ENCODE measurements at regions of chr1 and their contacts with region 1.

Region 1: DNA sequence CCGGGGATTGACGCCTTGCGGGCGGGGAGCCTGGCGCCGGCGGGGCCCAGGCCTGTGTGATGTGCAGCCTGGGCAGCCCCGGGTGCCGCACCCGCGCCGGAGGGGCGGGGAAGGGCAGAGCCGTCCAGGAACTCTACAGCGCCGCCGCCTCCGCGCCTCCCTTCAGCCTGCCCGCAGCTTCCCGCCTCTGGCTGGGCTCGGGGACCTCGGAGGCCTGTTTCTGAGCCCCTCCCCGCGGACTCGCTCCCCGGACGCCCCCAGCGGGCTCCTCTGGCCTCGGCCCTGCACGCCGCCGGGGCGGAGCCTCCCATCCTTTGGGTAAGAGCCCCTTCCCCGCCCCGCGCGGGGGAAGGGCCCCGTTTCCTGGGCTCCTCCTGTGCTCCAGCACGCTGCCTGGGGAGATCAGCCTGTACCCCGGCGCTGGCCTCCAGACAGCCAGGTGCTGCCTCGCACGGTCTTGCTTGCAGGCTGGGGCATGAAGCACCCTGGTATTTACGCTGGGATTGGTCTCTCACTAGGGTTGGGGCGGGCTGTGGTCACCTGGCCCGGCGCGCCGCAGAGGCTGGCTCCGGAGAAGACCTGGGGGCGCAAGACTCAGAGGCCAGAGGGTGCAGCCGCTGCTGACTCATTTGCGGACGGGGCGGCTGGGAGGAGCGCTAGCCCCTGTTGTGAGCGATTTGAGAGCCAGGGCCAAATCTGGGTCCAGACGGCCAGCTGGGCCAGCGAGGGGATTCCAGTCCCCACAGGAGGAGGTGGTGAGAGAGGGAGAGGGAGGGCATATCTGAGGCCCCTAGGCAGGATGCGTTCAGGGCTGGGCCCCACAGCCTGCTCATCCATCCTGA is 5.7 kb upstream of the ACOT11 start:
- DNase-seq: peak; percentile 76 to 89
- H3K4me3 ChIP-seq: peak overlapping the region; percentile 18 to 67 (median 53)
- H3K27ac ChIP-seq: peak overlapping the region; percentile 66
- H3K4me1 ChIP-seq: peaks cover 4 to 14% (median 8%) of the 10 kb centered on the region in 4 experiments
- H3K27me3 ChIP-seq: no peaks in the 10 kb centered on the region
- CTCF ChIP-seq: peak in 1 of 3 experiments; percentile 12; a peak in 1 of 4 replicates
- EP300 ChIP-seq: no peak
- POLR2A ChIP-seq: peak; percentile 20 to 69; a peak in 2 of 3 replicates
- RAD21 ChIP-seq: no peak; a peak in 1 of 4 replicates

Region 2: GRCh38 chr1:54397090-54397591 is 145.2 kb before region 1 on chr1:
- CTCF ChIA-PET with region 1: no interaction called
- POLR2A ChIA-PET with region 1: no interaction called
- DNase-seq: no peak
- H3K4me3 ChIP-seq: no peak overlapping the region
- H3K27ac ChIP-seq: no peak overlapping the region
- H3K4me1 ChIP-seq: peaks cover 0 to 6% (median 4%) of the 10 kb centered on the region in 4 experiments; a peak in 4 of 7 replicates
- H3K27me3 ChIP-seq: no peaks in the 10 kb centered on the region
- CTCF ChIP-seq: no peak
- EP300 ChIP-seq: no peak
- POLR2A ChIP-seq: no peak
- RAD21 ChIP-seq: no peak

Region 3: GRCh38 chr1:54564312-54565112 is 22.2 kb after region 1 on chr1:
- CTCF ChIA-PET with region 1: interaction called, 19 read pairs
- POLR2A ChIA-PET with region 1: interaction called, 11 read pairs
- DNase-seq: no peak
- H3K4me3 ChIP-seq: no peak overlapping the region
- H3K27ac ChIP-seq: no peak overlapping the region
- H3K4me1 ChIP-seq: peaks cover 3 to 11% (median 3%) of the 10 kb centered on the region in 4 experiments
- H3K27me3 ChIP-seq: no peaks in the 10 kb centered on the region; a peak in 1 of 7 replicates
- CTCF ChIP-seq: no peak
- EP300 ChIP-seq: no peak
- POLR2A ChIP-seq: no peak
- RAD21 ChIP-seq: no peak

Measured in H1 (cell line).